ENCODE measurements at regions of chr7 and their contacts with region 1.

Region 1: DNA sequence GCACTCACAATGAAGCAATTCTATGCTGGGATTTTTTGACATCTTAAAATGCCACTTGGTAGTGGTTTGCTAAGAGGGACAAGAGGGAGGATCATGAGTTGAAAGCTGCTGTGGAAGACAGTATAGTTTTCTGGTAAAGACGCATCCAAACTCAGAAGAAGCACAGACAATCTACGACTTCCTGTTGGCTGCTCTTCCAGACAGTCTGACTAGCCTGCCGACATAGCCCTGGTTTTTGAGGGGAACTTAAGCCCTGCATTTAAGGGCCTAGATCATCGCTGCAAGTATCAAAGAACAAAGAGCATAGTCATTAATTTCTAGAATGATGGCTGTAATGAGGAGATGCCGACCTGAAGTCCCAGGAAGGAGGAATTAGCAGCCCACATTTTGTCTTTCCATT is 99.9 kb upstream of the IKZF1 start:
- DNase-seq: no peak
- CTCF ChIP-seq: no peak

Region 2: GRCh38 chr7:49776994-49777393 is 427.6 kb before region 1 on chr7:
- in situ Hi-C with region 1: no loop called
- DNase-seq: no peak
- CTCF ChIP-seq: peak; percentile 35

Region 3: GRCh38 chr7:50147951-50148808 is 56.4 kb before region 1 on chr7:
- in situ Hi-C with region 1: loop called (anchors 5 kb)
- DNase-seq: no peak
- CTCF ChIP-seq: no peak

Region 4: DNA sequence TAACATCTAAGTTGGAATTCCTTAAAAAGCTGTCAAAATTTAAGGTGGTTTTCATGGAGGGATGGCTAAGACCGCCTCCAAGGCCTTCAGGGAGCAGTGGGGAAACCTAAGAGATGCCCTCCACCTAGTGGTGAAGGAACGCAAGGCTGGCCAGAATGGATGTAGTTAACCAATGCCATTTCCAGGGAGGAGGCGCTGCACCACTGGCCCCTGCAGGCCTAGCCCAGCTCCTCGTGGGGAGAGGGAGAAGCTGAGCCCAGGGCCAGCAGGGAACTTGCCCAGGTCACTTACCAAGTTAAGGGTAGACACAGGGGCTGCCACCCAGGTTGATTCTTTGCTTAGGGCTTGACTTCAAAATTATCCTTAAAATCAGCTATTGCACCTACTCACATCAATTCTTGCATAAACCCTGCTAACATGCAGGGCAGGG is 213.5 kb after region 1 on chr7:
- in situ Hi-C with region 1: loop called (anchors 5 kb)
- DNase-seq: peak; percentile 72
- CTCF ChIP-seq: peak; percentile 90

Measured in GM13976 (cell line).